ENCODE measurements at regions of chr4 and their contacts with region 1.

Region 1: DNA sequence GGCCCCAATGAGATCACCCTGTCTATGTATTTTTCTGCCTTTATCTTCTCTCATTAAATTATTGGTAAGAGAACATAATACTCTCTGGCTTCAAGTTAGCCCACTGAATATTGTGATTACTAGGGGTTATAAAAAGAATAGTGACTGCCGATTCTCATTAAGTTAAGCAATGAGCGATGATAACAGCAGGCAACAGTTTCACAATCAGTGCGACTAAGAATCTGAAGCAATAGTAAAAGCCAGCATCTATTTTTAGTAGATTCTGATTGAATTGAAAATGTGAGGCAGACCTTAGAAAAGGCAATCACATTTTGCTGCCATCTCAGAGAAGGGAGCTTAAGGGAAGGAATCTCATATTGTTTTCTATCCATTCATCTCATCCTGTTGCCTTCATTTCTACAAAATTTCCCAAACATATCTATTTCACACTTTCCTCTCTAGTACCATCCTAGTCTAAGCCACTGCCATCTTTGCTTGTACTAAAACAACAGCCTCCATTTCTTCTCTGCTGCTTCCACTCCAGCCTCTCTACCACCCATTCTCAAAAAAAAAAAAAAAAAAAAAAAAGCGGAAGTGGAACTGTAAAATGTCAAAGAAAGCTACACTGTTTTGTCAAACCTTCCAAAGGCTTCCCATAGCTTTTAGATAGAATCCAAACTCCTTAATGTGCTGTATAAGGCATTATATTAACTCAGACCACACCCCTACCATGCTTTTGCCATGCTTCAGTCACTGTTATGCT is 17.4 kb downstream of the GABRA4 start:
- DNase-seq: peak; percentile 23
- ATAC-seq: peak; percentile 75
- H3K4me3 ChIP-seq: no peak overlapping the region
- H3K27ac ChIP-seq: peak overlapping the region; percentile 58
- H3K4me1 ChIP-seq: no peaks in the 10 kb centered on the region
- H3K27me3 ChIP-seq: no peaks in the 10 kb centered on the region; a peak in 1 of 4 replicates
- CTCF ChIP-seq: no peak
- EP300 ChIP-seq: 0 out of 4 replicates have a peak, but pooled peaks of 1 of the 2 experiments have one; percentile 11
- POLR2A ChIP-seq: no peak
- RAD21 ChIP-seq: no peak

Region 2: DNA sequence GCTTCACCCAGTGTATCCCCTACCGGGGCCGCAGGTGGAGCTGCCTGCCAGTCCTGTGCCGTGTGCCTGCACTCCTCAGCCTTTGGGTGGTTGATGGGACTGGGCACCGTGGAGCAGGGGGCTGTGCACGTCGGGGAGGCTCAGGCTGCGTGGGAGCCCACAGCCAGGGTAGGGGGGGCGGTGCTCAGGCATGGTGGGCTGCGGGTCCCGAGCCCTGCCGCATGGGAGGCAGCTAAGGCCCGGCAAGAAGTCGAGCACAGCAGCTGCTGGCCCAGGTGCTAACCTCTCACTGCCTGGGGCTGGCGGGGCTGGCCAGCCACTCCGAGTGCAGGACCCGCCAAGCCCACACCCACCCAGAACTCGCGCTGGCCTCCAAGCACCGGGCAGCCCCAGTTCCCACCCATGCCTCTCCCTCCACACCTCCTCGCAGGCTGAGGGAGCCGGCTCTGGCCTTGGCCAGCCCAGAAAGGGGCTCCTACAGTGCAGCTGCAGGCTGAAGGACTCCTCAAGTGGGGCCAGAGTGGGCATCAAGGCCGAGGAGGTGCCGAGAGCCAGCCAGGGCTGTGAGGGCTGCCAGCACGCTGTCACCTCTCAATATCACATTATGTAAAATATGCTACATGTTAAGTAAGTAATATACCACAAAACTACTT is 171.1 kb before region 1 on chr4:
- CTCF ChIA-PET with region 1: no interaction called
- POLR2A ChIA-PET with region 1: no interaction called
- RAD21 ChIA-PET with region 1: no interaction called
- SMC1A ChIA-PET with region 1: no interaction called
- in situ Hi-C with region 1: no loop called
- intact Hi-C with region 1: no loop called
- DNase-seq: no peak
- ATAC-seq: no peak
- H3K4me3 ChIP-seq: no peak overlapping the region
- H3K27ac ChIP-seq: no peak overlapping the region
- H3K4me1 ChIP-seq: no peaks in the 10 kb centered on the region
- H3K27me3 ChIP-seq: no peaks in the 10 kb centered on the region
- CTCF ChIP-seq: no peak
- EP300 ChIP-seq: no peak
- POLR2A ChIP-seq: no peak
- RAD21 ChIP-seq: no peak

Region 3: DNA sequence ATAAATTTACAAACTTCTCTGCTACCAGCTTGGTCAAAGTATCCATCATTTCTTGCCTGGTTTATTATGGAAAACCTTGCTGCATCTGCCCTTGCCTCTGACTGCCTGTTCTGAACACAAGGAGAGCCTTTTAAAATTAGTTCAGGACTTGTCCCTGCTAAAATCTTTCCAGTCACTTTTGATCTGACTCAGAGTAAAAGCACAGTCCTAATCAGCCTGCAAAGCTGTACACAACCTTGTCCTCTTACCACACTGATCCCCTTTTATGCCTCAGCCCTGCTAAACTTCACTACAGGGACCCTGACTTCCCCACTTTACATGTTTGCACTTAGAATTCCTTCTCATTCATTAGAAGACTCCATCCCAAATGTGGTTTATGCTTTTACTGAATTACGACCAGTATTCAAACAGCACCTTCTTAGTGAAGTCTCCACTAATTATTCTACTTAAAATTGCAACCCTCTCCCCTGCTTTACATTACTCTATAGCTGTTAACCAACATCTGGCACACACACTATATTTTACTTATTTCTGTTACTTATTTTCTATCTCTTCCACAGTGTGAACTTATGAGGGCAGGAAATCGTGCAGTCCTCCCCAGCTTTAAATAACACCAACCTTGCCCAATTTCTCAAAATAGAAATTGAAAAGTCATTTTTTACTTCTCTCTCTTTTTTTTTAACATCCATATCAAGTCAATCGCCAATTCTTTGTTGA is 11.1 kb after region 1 on chr4:
- CTCF ChIA-PET with region 1: interaction called, 23 read pairs
- POLR2A ChIA-PET with region 1: interaction called, 14 read pairs
- RAD21 ChIA-PET with region 1: interaction called, 10 read pairs
- SMC1A ChIA-PET with region 1: interaction called, 19 read pairs
- in situ Hi-C with region 1: no loop called
- intact Hi-C with region 1: no loop called
- DNase-seq: no peak
- ATAC-seq: peak; percentile 55; the same call in 2 of the 3 replicates
- H3K4me3 ChIP-seq: no peak overlapping the region
- H3K27ac ChIP-seq: no peak overlapping the region
- H3K4me1 ChIP-seq: no peaks in the 10 kb centered on the region
- H3K27me3 ChIP-seq: no peaks in the 10 kb centered on the region
- CTCF ChIP-seq: no peak
- EP300 ChIP-seq: no peak
- POLR2A ChIP-seq: no peak
- RAD21 ChIP-seq: no peak

Region 4: DNA sequence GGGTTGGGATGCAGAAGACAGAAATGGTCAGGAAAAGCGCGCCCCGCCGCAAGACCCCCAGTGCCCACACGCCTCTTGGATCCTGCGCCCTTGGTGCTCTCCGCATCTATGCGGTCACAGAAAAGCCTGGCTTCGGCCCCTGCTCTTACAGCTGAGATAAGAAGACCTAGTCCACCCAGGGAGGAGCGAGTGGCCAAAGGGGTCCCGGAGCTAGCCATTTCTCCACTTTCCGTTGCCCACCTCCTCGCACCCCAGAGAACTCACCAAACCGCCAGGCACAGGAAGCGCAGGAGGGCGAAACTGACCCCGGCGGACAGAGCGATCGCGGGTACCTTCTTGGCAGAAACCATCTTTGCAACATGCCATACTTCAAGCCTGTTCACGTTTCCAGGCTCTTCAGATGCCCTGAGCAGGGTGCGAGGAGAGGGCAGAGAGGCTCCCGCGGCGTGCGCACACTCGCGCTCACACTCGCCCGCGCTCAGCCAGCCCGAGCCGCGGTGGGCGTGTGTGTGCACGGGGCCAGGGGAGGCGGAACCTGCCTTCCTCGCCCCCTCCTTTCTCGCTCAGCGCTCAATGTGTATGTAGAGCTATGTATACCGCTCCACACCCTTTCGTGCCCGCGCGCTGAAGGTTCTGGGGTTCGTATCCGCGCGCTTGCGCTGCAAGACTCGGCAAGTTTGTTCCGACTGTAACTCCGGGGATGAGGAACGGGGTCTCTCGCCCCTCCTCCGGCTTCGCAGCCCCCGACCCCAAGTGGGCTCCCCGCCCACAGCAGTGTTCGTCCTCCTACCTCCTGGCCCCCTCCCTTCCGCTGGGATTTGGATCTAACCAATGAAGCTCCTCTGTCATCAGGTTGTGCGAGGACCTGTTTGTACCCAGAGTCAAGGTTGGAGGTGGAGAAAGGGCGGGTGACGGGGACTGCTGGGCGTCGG is 17.4 kb after region 1 on chr4 and contains the start of gene GABRA4:
- CTCF ChIA-PET with region 1: interaction called, 23 read pairs
- POLR2A ChIA-PET with region 1: interaction called, 14 read pairs
- RAD21 ChIA-PET with region 1: interaction called, 10 read pairs
- SMC1A ChIA-PET with region 1: interaction called, 19 read pairs
- in situ Hi-C with region 1: no loop called
- intact Hi-C with region 1: no loop called
- DNase-seq: no peak
- ATAC-seq: peak; percentile 71
- H3K4me3 ChIP-seq: no peak within 1 kb of the TSS
- H3K27ac ChIP-seq: no peak within 1 kb of the TSS
- H3K4me1 ChIP-seq: no peaks in the 10 kb centered on the region
- H3K27me3 ChIP-seq: peaks cover 6 to 9% of the 10 kb centered on the region in 2 experiments
- CTCF ChIP-seq: no peak
- EP300 ChIP-seq: no peak
- POLR2A ChIP-seq: no peak
- RAD21 ChIP-seq: no peak
- polyA plus RNA-seq, gene GABRA4: 1.3 to 2.4 TPM